ENCODE measurements at regions of chr1 and their contacts with region 1.

Region 1: DNA sequence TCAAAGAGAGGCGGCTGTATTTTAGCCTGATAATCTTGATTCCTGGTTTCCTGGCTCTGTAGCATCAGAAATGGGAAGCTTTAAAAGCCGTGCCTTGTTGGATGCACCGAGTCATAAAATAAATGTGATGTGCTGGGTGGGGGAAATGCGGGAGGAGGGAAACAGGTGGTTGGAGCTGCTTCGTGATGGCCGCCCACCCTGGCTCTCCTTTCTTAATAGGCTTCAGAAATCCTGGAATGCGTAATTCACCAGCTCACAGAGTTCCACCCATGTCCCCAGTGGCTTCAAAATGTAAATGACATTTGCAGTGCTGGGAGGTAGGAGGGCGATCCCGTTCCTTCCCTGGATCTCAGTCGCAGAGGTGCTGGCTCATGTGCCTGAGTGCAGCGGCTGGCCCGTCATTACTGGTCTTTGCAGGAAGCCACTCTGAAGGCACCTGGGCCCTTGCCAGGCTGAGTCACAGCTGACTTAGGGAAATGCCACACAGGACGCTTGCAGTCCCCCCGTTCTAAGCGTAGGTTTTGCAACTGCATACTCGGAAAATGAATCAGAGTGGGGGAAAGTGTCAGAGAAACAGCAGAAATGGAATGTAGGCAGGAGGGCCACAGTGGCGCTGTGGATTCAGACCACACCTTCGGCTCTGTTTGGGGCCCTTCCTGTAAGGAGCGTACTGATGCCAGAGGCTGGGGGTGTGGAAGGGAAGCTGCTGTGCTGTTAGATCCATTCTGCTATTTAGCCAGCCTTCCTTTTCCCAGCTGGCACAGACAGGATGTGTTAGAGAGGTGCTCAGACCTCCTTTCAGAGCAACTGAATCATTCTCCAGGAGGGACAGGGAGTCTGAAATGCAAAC is 37.6 kb downstream of the GALNT2 start:
- DNase-seq: peak; percentile 99
- ATAC-seq: peak; percentile 85 to 95 (median 92)
- H3K4me3 ChIP-seq: peak overlapping the region; percentile 23
- H3K27ac ChIP-seq: peak overlapping the region; percentile 85
- H3K4me1 ChIP-seq: peaks cover 64% of the 10 kb centered on the region
- H3K27me3 ChIP-seq: no peaks in the 10 kb centered on the region
- CTCF ChIP-seq: no peak

Region 2: GRCh38 chr1:229964281-229964680 is 140.3 kb before region 1 on chr1:
- intact Hi-C with region 1: no loop called
- DNase-seq: no peak
- ATAC-seq: no peak
- H3K4me3 ChIP-seq: no peak overlapping the region
- H3K27ac ChIP-seq: no peak overlapping the region
- H3K4me1 ChIP-seq: no peaks in the 10 kb centered on the region
- H3K27me3 ChIP-seq: no peaks in the 10 kb centered on the region
- CTCF ChIP-seq: no peak

Region 3: GRCh38 chr1:230073371-230074035 is 31.1 kb before region 1 on chr1:
- intact Hi-C with region 1: loop called (anchors 2 kb)
- DNase-seq: peak; percentile 58 to 89
- ATAC-seq: peak; percentile 84 to 90 (median 87)
- H3K4me3 ChIP-seq: peak overlapping the region; percentile 43
- H3K27ac ChIP-seq: peak overlapping the region; percentile 91
- H3K4me1 ChIP-seq: peaks cover 75% of the 10 kb centered on the region
- H3K27me3 ChIP-seq: no peaks in the 10 kb centered on the region
- CTCF ChIP-seq: no peak

Region 4: GRCh38 chr1:230169454-230170152 is 65.0 kb after region 1 on chr1:
- intact Hi-C with region 1: loop called in 1 of 2 experiments (anchors 5 kb)
- DNase-seq: no peak
- ATAC-seq: peak in 2 of 4 donors; percentile 20 to 21
- H3K4me3 ChIP-seq: peak overlapping the region; percentile 52
- H3K27ac ChIP-seq: peak overlapping the region; percentile 64
- H3K4me1 ChIP-seq: peaks cover 48% of the 10 kb centered on the region
- H3K27me3 ChIP-seq: no peaks in the 10 kb centered on the region
- CTCF ChIP-seq: no peak

Region 5: DNA sequence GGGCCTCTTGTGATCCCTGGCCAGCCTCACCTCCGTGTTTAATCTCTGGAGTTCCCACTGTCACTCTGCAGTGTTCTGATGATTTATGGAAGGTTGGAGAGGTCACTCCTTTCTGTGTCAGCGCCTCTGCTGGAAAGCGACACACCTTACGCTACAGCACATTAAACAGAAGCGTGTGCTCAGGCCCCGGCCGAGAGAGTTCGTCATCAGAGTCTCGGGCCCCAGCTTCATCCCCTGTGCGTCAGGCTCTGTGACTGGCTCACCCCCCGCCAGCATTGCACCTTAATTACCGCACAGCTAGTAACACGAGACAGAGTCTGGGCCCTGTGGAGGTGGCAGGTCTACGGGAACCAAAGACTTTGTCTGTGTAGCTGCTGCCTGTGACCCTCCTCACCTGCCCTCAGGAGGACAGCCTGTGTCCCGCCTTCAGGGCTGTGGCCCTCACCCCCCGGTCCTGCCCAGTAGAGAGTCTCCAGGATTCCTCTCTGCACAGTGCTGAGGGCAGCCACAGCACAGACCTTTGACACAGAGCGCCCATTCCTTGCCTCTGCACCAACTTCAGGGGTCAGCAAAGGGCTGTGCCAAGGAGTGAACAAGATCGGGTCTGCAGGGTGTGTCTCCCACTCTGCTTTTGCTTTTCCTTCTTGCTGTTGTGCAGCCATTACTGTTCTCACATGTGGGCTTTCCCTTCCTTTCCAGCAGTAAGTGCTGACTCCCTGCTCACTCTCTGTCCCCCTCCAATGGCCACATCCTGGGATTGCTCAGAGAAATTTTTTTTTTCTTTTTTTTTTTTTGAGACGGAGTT is 163.9 kb after region 1 on chr1:
- intact Hi-C with region 1: no loop called
- DNase-seq: peak in 1 of 2 donors; percentile 72
- ATAC-seq: peak; percentile 49 to 88 (median 72)
- H3K4me3 ChIP-seq: no peak overlapping the region
- H3K27ac ChIP-seq: peak overlapping the region; percentile 42
- H3K4me1 ChIP-seq: peaks cover 21% of the 10 kb centered on the region
- H3K27me3 ChIP-seq: no peaks in the 10 kb centered on the region
- CTCF ChIP-seq: peak; percentile 43

Measured in psoas muscle (tissue), 8 donors.